IMR-90 (cell line): ENCODE measurements at regions of chr7 and their contacts with region 1.

Region 1: DNA sequence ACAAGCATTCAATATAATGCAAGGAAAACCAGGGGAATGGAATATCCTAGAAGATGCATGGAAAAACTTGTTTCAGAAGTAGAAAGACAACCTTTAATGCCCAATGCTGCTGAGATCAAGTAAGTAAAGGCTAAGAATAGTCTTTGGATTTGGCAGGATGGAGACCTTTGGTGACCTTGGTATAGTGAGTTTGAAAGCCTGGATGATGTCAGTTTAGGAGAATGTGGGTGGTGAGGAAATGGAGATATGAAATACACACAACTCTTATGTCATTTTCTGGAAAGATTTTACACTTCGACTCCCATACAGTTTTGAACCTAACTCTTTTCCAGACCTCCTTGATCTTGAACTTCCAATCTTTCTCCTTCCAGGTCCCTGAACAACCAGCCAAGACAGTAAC is 185.7 kb downstream of the TFEC start:
- DNase-seq: peak; percentile 52
- ATAC-seq: no peak
- H3K4me3 ChIP-seq: no peak overlapping the region
- H3K27ac ChIP-seq: no peak overlapping the region
- H3K4me1 ChIP-seq: no peaks in the 10 kb centered on the region
- H3K27me3 ChIP-seq: no peaks in the 10 kb centered on the region
- CTCF ChIP-seq: no peak
- POLR2A ChIP-seq: no peak
- RAD21 ChIP-seq: no peak

Region 2: DNA sequence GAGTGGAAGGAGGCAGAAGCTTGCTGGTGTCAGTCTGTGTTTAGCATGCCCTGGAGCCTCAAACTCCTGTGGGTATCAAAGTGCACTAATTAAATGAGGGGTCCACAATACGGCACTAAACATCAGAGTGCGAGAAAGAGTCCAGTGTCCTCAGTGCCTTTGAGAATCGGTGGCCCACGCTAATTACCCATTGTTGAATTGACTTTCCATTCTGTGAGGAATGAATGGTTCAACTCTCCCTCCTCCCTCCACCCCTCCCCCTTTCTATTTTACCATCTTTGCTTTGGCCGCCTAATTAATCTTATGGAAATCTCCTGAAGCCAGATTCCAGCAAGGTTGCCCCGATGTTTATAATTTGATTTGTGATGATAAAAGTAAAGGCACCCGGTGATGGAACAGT is 32.1 kb before region 1 on chr7:
- CTCF ChIA-PET with region 1: no interaction called
- POLR2A ChIA-PET with region 1: no interaction called
- dilution Hi-C with region 1: no loop called
- in situ Hi-C with region 1: no loop called
- intact Hi-C with region 1: no loop called
- DNase-seq: no peak
- ATAC-seq: no peak
- H3K4me3 ChIP-seq: no peak overlapping the region
- H3K27ac ChIP-seq: no peak overlapping the region
- H3K4me1 ChIP-seq: no peaks in the 10 kb centered on the region
- H3K27me3 ChIP-seq: no peaks in the 10 kb centered on the region; the same call in 1 of the 2 replicates
- CTCF ChIP-seq: no peak
- POLR2A ChIP-seq: no peak
- RAD21 ChIP-seq: no peak

Region 3: GRCh38 chr7:115827305-115828045 is 17.4 kb before region 1 on chr7:
- CTCF ChIA-PET with region 1: interaction called, 10 read pairs
- POLR2A ChIA-PET with region 1: no interaction called
- dilution Hi-C with region 1: no loop called
- in situ Hi-C with region 1: no loop called
- intact Hi-C with region 1: no loop called
- DNase-seq: no peak
- ATAC-seq: no peak
- H3K4me3 ChIP-seq: no peak overlapping the region
- H3K27ac ChIP-seq: no peak overlapping the region
- H3K4me1 ChIP-seq: 0 out of 2 replicates have a peak, but pooled peaks cover 2% of the 10 kb centered on the region
- H3K27me3 ChIP-seq: no peaks in the 10 kb centered on the region
- CTCF ChIP-seq: no peak
- POLR2A ChIP-seq: no peak
- RAD21 ChIP-seq: no peak